ENCODE measurements at regions of chr3 and their contacts with region 1.

Region 1: GRCh38 chr3:50298836-50299637 is at the starts of genes HYAL3 and NAA80:
- DNase-seq: peak; percentile 99
- H3K4me3 ChIP-seq: peak within 1 kb of the TSS; percentile 62 to 92 (median 70)
- H3K27ac ChIP-seq: peak within 1 kb of the TSS; percentile 91 to 94
- H3K4me1 ChIP-seq: peaks cover 5 to 11% of the 10 kb centered on the region in 2 donors
- H3K27me3 ChIP-seq: no peaks in the 10 kb centered on the region
- CTCF ChIP-seq: peak; percentile 23 to 59 (median 56)
- POLR2A ChIP-seq: peak; percentile 69
- total RNA-seq, gene HYAL3: 2.3 to 6.4 (median 2.7) TPM
- total RNA-seq, gene NAA80: 6.0 to 8.8 (median 8.5) TPM

Region 2: GRCh38 chr3:49434731-49435130 is 864.3 kb before region 1 on chr3:
- intact Hi-C with region 1: loop called (anchors 5 kb)
- DNase-seq: no peak
- H3K4me3 ChIP-seq: no peak overlapping the region
- H3K27ac ChIP-seq: no peak overlapping the region
- H3K4me1 ChIP-seq: no peaks in the 10 kb centered on the region
- H3K27me3 ChIP-seq: no peaks in the 10 kb centered on the region
- CTCF ChIP-seq: no peak
- POLR2A ChIP-seq: no peak

Region 3: GRCh38 chr3:51338632-51339031 is 1039.6 kb after region 1 on chr3:
- intact Hi-C with region 1: loop called (anchors 5 kb)
- DNase-seq: no peak
- H3K4me3 ChIP-seq: no peak overlapping the region
- H3K27ac ChIP-seq: no peak overlapping the region
- H3K4me1 ChIP-seq: no peaks in the 10 kb centered on the region
- H3K27me3 ChIP-seq: no peaks in the 10 kb centered on the region
- CTCF ChIP-seq: no peak
- POLR2A ChIP-seq: no peak

Measured in breast epithelium (tissue), 4 donors.